Panc1 (cell line): ENCODE measurements at regions of chr15 and their contacts with region 1.

Region 1: GRCh38 chr15:64740311-64741170 is 34.8 kb downstream of the RBPMS2 start:
- DNase-seq: no peak
- ATAC-seq: peak; percentile 50; the same call in 1 of the 2 replicates
- H3K4me3 ChIP-seq: no peak overlapping the region
- H3K27ac ChIP-seq: no peak overlapping the region
- H3K4me1 ChIP-seq: no peaks in the 10 kb centered on the region
- H3K27me3 ChIP-seq: no peaks in the 10 kb centered on the region
- CTCF ChIP-seq: no peak

Region 2: DNA sequence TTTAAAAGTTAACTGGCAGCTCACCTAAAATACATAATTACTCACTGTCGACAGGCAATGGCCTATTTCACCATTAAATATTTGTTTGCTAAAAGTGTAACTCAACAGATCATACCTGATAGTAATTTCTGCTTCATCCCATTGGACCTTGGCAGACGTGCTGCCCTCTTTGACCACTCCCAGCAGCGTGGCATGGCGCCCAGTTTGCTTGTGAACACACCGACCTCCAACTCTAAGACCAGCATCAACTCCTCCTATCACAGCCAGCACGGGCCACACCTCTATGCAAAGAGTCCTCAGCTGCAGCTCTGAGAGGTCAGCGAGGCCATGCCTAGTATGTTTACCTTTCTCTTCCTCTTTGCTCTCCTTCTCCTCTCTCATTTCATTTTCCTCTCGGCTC is 1062.8 kb before region 1 on chr15:
- CTCF ChIA-PET with region 1: no interaction called
- POLR2A ChIA-PET with region 1: no interaction called
- in situ Hi-C with region 1: no loop called
- intact Hi-C with region 1: no loop called
- DNase-seq: no peak
- ATAC-seq: no peak
- H3K4me3 ChIP-seq: no peak overlapping the region
- H3K27ac ChIP-seq: no peak overlapping the region
- H3K4me1 ChIP-seq: no peaks in the 10 kb centered on the region
- H3K27me3 ChIP-seq: no peaks in the 10 kb centered on the region
- CTCF ChIP-seq: no peak

Region 3: GRCh38 chr15:64611085-64611725 is 129.3 kb before region 1 on chr15:
- CTCF ChIA-PET with region 1: no interaction called
- POLR2A ChIA-PET with region 1: no interaction called
- in situ Hi-C with region 1: no loop called
- intact Hi-C with region 1: no loop called
- DNase-seq: no peak
- ATAC-seq: no peak
- H3K4me3 ChIP-seq: no peak overlapping the region
- H3K27ac ChIP-seq: no peak overlapping the region
- H3K4me1 ChIP-seq: peaks cover 4% of the 10 kb centered on the region; the same call in 1 of the 2 replicates
- H3K27me3 ChIP-seq: no peaks in the 10 kb centered on the region
- CTCF ChIP-seq: no peak

Region 4: DNA sequence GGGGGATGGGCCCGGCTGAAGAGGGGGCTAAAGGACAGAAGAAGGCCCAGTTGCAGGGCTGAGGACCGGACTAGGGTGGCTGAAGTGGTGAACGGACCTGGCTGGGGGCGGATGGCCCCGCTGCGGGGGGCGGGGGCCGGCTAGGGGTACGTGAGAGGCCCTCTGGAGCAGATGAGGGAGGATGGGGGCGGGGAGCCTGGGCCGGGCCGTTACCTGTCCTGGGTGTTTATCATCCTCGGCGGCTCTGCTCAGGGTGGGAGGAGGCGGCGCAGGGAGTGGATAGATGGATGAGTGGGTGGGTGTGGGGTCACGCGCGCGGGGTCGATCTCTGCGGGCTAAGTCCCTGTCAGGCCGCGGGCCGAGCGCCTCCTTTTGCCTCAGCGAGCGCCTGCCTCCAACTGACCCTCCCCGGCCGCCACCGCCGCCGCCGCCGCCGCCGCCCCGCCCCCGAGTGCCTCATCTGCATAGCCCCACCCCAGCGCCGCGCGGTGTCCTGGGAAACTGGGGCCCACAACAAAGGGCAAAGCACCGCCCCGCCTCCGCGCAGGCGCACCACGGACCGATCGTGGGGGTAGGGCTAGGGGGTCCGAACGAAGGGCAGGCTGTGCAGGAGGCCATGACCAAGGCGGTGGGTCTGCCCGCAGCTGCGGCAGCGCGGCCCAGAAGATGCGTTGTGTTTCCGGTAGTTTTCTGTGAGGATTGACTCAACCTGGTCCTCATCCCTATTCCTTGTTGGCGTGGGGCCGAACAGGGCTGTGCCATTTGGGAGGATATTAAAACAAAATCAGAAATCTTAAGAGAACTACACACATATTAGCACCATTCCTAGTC is 37.5 kb before region 1 on chr15:
- CTCF ChIA-PET with region 1: interaction called, 12 read pairs
- POLR2A ChIA-PET with region 1: no interaction called
- in situ Hi-C with region 1: no loop called
- intact Hi-C with region 1: no loop called
- DNase-seq: no peak
- ATAC-seq: peak; percentile 98
- H3K4me3 ChIP-seq: peak overlapping the region; percentile 62 to 89
- H3K27ac ChIP-seq: peak overlapping the region; percentile 89
- H3K4me1 ChIP-seq: peaks cover 39% of the 10 kb centered on the region
- H3K27me3 ChIP-seq: no peaks in the 10 kb centered on the region
- CTCF ChIP-seq: no peak

Region 5: GRCh38 chr15:64841258-64842095 is 100.9 kb after region 1 on chr15 and contains the start of gene PLEKHO2:
- CTCF ChIA-PET with region 1: no interaction called
- POLR2A ChIA-PET with region 1: interaction called, 20 read pairs
- in situ Hi-C with region 1: no loop called
- intact Hi-C with region 1: no loop called
- DNase-seq: no peak
- ATAC-seq: peak; percentile 96
- H3K4me3 ChIP-seq: peak within 1 kb of the TSS; percentile 87 to 88
- H3K27ac ChIP-seq: peak within 1 kb of the TSS; percentile 91
- H3K4me1 ChIP-seq: peaks cover 10% of the 10 kb centered on the region
- H3K27me3 ChIP-seq: no peaks in the 10 kb centered on the region
- CTCF ChIP-seq: no peak
- total RNA-seq, gene PLEKHO2: 11.1 TPM